Mammary epithelial cell (primary cell): ENCODE measurements at regions of chr7 and their contacts with region 1.

Region 1: DNA sequence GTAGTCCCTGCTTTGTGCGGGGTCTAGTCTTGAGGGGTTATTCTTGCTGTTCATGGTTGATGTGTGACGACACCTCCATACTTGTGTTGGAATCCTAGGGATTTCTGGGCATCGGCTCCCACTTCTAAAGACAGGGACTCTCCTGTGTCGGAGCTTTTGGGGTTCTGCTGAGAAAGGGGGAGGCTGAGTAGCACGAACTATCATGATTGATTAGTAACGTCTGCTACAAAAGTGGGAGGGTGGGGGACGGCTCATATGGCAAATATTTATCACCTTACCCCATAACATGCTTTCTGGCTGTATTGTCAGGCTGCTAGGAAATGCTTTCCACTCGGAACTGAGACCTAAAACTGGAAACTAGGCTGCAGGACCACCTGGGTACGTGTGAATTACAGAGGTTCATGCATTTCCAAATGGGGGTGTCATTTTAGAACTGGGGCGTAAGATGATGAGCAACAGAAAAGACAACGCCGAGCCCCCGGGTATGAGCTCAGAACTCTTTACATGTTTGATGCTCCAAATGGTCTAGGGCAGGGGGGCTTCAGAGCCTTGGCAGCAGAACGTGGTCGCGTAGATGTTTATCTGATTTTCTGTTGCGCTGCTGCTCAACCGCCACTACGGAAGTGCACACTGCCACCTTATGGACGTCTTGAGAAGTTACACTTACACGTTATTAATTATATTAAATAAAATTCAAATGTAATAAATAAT is 15.1 kb upstream of the NME8 start:
- DNase-seq: peak; percentile 6
- H3K4me3 ChIP-seq: peak overlapping the region; percentile 28 to 31 (median 28)
- H3K27ac ChIP-seq: no peak overlapping the region
- H3K4me1 ChIP-seq: no peaks in the 10 kb centered on the region
- H3K27me3 ChIP-seq: no peaks in the 10 kb centered on the region
- CTCF ChIP-seq: peak; percentile 48 to 66

Region 2: DNA sequence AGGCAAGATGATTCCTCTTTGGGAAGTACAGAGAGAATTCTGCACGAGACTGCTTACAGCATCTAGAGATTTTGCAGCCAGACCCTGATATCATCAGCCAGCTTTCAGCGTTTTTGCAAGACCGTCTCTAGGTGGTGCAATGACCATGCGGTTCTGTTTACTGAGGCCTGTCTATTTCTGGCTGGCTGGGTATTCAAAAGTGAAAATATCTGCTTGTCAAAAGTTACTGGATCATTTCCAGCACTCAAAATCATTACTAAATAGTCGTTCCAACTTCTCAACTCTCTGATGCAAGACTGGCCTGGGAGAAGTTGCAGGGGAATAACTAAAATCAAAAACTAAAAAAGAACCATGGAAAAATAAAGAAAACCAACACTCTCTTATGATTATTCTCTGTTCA is 624.7 kb before region 1 on chr7:
- CTCF ChIA-PET with region 1: no interaction called
- dilution Hi-C with region 1: no loop called
- in situ Hi-C with region 1: no loop called
- intact Hi-C with region 1: loop called (anchors 1 kb)
- DNase-seq: peak; percentile 28
- H3K4me3 ChIP-seq: no peak overlapping the region
- H3K27ac ChIP-seq: no peak overlapping the region
- H3K4me1 ChIP-seq: no peaks in the 10 kb centered on the region
- H3K27me3 ChIP-seq: no peaks in the 10 kb centered on the region
- CTCF ChIP-seq: peak; percentile 23 to 50

Region 3: GRCh38 chr7:37234928-37235327 is 598.3 kb before region 1 on chr7:
- CTCF ChIA-PET with region 1: no interaction called
- dilution Hi-C with region 1: no loop called
- in situ Hi-C with region 1: loop called (anchors 10 kb)
- intact Hi-C with region 1: loop called (anchors 1 kb)
- DNase-seq: peak; percentile 15
- H3K4me3 ChIP-seq: no peak overlapping the region
- H3K27ac ChIP-seq: no peak overlapping the region
- H3K4me1 ChIP-seq: no peaks in the 10 kb centered on the region
- H3K27me3 ChIP-seq: no peaks in the 10 kb centered on the region
- CTCF ChIP-seq: peak; percentile 22 to 68

Region 4: DNA sequence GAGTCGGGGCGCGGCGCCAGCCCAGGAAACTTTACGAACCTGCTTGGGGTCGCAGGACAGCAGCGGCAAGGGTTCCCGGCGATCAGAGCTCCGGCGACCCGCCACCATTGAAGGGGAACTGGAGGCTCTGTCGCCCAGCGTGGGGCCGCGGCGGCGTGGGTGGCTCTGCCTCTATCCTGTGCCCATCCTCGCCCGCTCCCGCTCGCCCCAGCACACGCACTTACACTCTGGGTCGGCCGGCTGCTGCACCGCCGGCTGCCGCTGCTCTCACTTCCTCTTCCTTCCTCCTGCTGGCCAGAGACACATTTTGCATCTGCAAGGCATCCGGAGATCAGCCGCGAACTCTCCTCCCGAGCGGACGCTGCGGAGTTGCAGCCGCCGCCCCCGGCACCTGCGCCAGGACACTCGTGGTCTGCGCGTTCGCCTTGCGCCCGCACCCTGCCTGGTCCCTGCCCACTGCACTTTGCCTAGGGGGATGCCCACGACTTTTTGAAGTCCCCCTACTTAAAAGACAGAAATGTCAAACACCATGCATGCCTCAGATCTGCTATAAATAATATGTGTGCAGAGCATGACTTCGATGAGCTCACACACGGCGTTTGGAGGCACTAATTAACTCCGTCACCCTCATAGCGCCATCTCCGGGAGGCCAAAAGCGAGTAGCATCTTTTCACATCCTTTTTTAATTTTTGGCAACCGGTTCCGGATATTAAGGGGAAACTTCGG is 384.5 kb before region 1 on chr7 and contains the start of gene ELMO1:
- CTCF ChIA-PET with region 1: no interaction called
- dilution Hi-C with region 1: no loop called
- in situ Hi-C with region 1: no loop called
- intact Hi-C with region 1: loop called (anchors 5 kb)
- DNase-seq: peak; percentile 57
- H3K4me3 ChIP-seq: peak within 1 kb of the TSS; percentile 27 to 46 (median 36)
- H3K27ac ChIP-seq: no peak within 1 kb of the TSS
- H3K4me1 ChIP-seq: peaks cover 13% of the 10 kb centered on the region
- H3K27me3 ChIP-seq: peaks cover 22% of the 10 kb centered on the region
- CTCF ChIP-seq: peak; percentile 14 to 33
- total RNA-seq, gene ELMO1: 9.5 to 12.1 TPM

Region 5: DNA sequence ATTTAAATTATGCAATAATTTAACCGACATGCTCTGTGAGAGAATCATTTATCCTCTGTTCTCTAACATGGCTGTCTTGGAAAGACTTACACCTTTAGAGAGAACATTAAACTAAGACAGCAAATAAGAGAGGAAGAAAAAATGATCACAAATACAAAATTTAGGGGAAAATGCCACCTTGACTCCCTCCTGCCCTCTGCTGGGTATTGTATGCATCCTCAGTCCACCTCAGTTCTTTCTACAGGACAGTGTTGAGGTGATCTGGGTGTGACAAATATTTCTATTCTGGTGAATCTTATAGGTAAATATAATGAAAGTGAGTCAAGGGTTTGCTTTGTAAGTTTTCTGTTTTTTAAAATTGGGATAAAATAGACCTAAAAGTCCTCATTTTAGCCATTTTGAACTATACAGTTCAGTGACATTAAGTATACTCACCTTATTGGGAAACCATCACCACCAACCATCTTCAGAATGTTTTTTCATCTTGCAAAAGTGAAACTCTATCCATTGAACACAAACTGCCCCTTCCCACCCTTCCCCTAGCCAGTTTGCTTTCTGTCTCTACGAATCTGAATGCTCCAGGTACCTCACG is 323.1 kb before region 1 on chr7:
- CTCF ChIA-PET with region 1: no interaction called
- dilution Hi-C with region 1: no loop called
- in situ Hi-C with region 1: no loop called
- intact Hi-C with region 1: loop called (anchors 1 kb)
- DNase-seq: no peak
- H3K4me3 ChIP-seq: no peak overlapping the region
- H3K27ac ChIP-seq: no peak overlapping the region
- H3K4me1 ChIP-seq: no peaks in the 10 kb centered on the region
- H3K27me3 ChIP-seq: no peaks in the 10 kb centered on the region
- CTCF ChIP-seq: peak; percentile 60 to 69

Region 6: GRCh38 chr7:37633048-37633447 is 200.2 kb before region 1 on chr7:
- CTCF ChIA-PET with region 1: no interaction called
- dilution Hi-C with region 1: no loop called
- in situ Hi-C with region 1: no loop called
- intact Hi-C with region 1: loop called (anchors 10 kb)
- DNase-seq: no peak
- H3K4me3 ChIP-seq: no peak overlapping the region
- H3K27ac ChIP-seq: no peak overlapping the region
- H3K4me1 ChIP-seq: no peaks in the 10 kb centered on the region
- H3K27me3 ChIP-seq: no peaks in the 10 kb centered on the region
- CTCF ChIP-seq: no peak

Region 7: DNA sequence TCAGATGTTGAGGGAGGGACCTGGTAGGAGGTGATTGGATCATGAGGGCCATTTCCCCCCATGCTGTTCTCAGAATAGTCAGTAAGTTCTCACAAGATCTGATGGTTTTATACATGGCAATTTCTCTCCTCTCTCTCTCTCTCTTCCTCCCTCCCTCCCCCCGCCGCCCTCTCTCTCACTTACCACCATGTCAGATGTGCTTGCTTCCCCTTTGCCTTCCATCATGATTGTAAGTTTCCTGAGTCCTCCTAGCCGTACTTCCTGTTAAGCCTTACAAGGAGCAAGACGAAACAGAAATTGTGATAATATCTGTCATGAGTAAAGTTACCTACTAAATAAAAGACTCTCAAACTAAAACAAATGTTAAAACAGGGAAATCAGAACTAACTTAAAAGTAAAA is 169.6 kb before region 1 on chr7:
- CTCF ChIA-PET with region 1: no interaction called
- dilution Hi-C with region 1: no loop called
- in situ Hi-C with region 1: no loop called
- intact Hi-C with region 1: no loop called
- DNase-seq: no peak
- H3K4me3 ChIP-seq: no peak overlapping the region
- H3K27ac ChIP-seq: no peak overlapping the region
- H3K4me1 ChIP-seq: no peaks in the 10 kb centered on the region
- H3K27me3 ChIP-seq: no peaks in the 10 kb centered on the region
- CTCF ChIP-seq: no peak

Region 8: GRCh38 chr7:37732253-37732652 is 101.0 kb before region 1 on chr7:
- CTCF ChIA-PET with region 1: no interaction called
- dilution Hi-C with region 1: no loop called
- in situ Hi-C with region 1: no loop called
- intact Hi-C with region 1: no loop called
- DNase-seq: peak; percentile 12
- H3K4me3 ChIP-seq: no peak overlapping the region
- H3K27ac ChIP-seq: no peak overlapping the region
- H3K4me1 ChIP-seq: no peaks in the 10 kb centered on the region
- H3K27me3 ChIP-seq: no peaks in the 10 kb centered on the region
- CTCF ChIP-seq: peak; percentile 21 to 42

Region 9: DNA sequence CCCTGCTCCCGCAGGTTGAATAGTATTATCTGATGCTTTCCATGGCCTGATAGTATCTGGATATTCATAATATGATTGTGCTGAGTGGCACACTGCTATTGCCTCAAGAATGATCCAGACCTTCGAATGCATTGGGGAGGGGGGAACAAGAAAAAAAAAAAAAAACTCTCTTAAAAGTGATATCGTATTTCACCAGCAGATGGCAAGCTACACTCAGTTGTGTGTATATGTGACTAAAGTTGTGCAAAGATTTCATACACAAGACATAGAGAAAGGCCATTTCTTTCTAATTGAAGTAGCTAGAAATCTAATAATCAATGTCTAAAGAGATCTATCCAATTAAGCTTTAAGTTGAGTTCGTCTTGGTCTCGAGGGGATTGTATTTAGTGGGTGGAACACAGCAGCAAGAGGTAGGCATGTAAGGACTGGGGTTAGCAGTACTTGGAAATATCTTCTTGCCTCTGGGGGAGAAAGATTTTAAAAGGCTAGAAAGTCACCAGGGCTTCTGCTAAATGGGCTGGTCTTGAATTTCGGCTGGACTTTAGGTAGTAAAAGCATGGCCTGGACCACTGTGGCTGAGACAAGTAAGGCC is 68.1 kb after region 1 on chr7:
- CTCF ChIA-PET with region 1: no interaction called
- dilution Hi-C with region 1: no loop called
- in situ Hi-C with region 1: no loop called
- intact Hi-C with region 1: no loop called
- DNase-seq: peak; percentile 6
- H3K4me3 ChIP-seq: no peak overlapping the region
- H3K27ac ChIP-seq: no peak overlapping the region
- H3K4me1 ChIP-seq: peaks cover 6% of the 10 kb centered on the region
- H3K27me3 ChIP-seq: peaks cover 2% of the 10 kb centered on the region
- CTCF ChIP-seq: peak; percentile 55 to 58